Calu3 (cell line): ENCODE measurements at regions of chr14 and their contacts with region 1.

Region 1: DNA sequence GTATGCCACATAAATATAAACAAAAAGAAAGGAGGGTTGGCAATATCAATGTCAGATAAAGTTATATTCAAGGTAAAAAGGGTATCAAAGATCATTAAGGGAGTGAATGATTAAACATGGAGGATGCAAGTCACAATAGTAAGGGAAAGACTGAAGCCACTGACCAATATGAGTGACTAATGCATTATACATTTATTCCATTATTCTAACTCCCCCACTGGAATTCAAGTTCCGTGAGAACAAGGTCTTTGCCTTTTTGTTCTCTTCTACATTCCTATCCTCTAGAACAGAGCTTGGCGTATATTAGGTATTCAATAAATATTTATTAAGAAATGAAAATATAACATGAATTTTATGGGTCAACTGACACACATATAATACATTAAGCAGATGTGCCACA is 30.7 kb downstream of the MAP4K5 start:
- DNase-seq: no peak
- H3K4me3 Mint-ChIP-seq: no peak overlapping the region
- H3K27ac Mint-ChIP-seq: no peak overlapping the region
- H3K4me1 Mint-ChIP-seq: peaks cover 38% of the 10 kb centered on the region
- H3K27me3 Mint-ChIP-seq: no peaks in the 10 kb centered on the region
- CTCF ChIP-seq: no peak

Region 2: GRCh38 chr14:49620182-49621113 is 881.2 kb before region 1 on chr14 and contains the starts of genes MGAT2 and RPL36AL:
- CTCF ChIA-PET with region 1: no interaction called
- intact Hi-C with region 1: no loop called
- DNase-seq: peak; percentile 99
- H3K4me3 Mint-ChIP-seq: peak within 1 kb of the TSS; percentile 95
- H3K27ac Mint-ChIP-seq: peak within 1 kb of the TSS; percentile 99
- H3K4me1 Mint-ChIP-seq: peaks cover 17% of the 10 kb centered on the region
- H3K27me3 Mint-ChIP-seq: no peaks in the 10 kb centered on the region
- CTCF ChIP-seq: no peak
- total RNA-seq, gene MGAT2: 39.3 and 45.8 TPM in 2 replicates
- total RNA-seq, gene RPL36AL: 159 and 161 TPM in 2 replicates

Region 3: DNA sequence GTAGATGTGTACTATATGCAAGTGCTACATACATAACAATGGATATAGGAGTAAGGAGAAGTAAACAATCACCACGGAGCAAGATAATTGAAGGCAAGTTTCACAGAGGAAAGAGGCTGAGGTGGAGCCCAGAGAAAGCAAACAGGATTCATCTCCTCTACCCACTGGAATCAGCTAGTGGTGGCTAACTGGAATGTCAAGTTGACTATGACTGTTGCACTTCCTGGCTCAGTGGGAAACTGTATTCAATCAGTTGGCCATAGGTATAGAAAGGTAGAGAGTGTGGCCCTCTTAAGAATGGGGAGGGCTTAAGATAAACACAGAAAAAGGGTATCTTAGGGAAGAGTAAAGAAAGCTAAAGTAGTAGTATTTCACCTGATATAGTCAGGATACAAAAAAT is 31.7 kb before region 1 on chr14:
- CTCF ChIA-PET with region 1: no interaction called
- intact Hi-C with region 1: loop called (anchors 5 kb)
- DNase-seq: no peak
- H3K4me3 Mint-ChIP-seq: no peak overlapping the region
- H3K27ac Mint-ChIP-seq: no peak overlapping the region
- H3K4me1 Mint-ChIP-seq: no peaks in the 10 kb centered on the region
- H3K27me3 Mint-ChIP-seq: no peaks in the 10 kb centered on the region
- CTCF ChIP-seq: no peak

Region 4: GRCh38 chr14:50489489-50490250 is 12.0 kb before region 1 on chr14:
- CTCF ChIA-PET with region 1: no interaction called
- intact Hi-C with region 1: no loop called
- DNase-seq: no peak
- H3K4me3 Mint-ChIP-seq: no peak overlapping the region
- H3K27ac Mint-ChIP-seq: no peak overlapping the region
- H3K4me1 Mint-ChIP-seq: no peaks in the 10 kb centered on the region
- H3K27me3 Mint-ChIP-seq: no peaks in the 10 kb centered on the region
- CTCF ChIP-seq: no peak

Region 5: DNA sequence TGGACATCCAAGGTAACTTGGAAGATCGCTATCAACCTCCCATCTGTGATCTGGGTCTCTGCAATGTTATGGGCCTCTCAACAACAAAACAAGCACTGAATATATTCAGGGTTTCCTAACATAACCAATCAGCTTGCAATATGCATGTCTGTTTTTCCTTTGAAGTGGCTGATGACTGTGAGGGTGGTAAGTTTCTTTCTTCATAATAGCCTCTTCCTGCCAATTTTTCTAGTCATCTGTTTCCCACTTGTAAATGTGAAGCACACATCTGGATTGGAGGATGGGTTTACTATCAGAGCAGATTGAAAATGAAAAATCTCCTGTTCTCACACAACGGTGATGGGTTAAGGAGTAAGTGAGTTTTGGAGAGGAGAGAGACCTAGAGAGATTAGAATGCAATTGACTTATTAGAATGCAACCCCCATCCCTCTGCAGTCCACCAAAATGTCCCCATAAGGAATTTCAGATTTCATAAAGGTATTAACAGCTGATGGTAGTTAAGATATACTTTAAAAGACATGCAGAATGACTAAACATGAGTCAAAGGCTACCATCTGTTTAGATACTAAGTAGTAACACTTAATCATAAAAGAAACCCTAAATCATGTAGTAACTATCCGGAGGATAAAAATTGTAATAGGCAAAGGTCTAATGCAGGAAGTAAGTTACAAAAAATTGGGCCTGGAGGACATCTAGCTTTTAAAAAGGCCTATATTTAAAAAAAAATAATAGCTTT is 224.9 kb after region 1 on chr14:
- CTCF ChIA-PET with region 1: no interaction called
- intact Hi-C with region 1: no loop called
- DNase-seq: no peak
- H3K4me3 Mint-ChIP-seq: no peak overlapping the region
- H3K27ac Mint-ChIP-seq: no peak overlapping the region
- H3K4me1 Mint-ChIP-seq: no peaks in the 10 kb centered on the region
- H3K27me3 Mint-ChIP-seq: no peaks in the 10 kb centered on the region
- CTCF ChIP-seq: no peak